Calu3 (cell line): ENCODE measurements at regions of chrX and their contacts with region 1.

Region 1: GRCh38 chrX:3638280-3638873 is 75.1 kb downstream of the PRKX start:
- DNase-seq: peak; percentile 43
- H3K4me3 Mint-ChIP-seq: no peak overlapping the region
- H3K27ac Mint-ChIP-seq: no peak overlapping the region
- H3K4me1 Mint-ChIP-seq: no peaks in the 10 kb centered on the region
- H3K27me3 Mint-ChIP-seq: no peaks in the 10 kb centered on the region
- CTCF ChIP-seq: peak; percentile 35

Region 2: DNA sequence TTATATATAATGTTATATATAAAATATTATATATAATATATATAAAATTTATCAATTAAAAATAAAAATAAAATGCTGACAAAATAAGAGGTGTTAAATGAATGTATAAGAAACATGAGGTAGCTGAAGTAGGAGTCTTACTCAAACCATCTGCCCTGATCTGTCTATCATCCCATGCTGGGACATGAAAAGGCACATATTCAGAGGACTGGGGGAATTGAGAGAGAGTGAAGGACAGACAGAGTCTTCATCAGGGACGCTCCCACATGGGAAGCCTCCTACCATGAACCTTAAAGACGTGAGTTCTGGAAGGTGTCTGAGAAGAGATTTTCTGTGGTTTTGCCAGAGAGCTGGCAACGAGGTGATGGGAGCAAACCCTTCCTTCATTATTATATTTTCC is 601.2 kb before region 1 on chrX:
- CTCF ChIA-PET with region 1: no interaction called
- intact Hi-C with region 1: loop called (anchors 10 kb)
- DNase-seq: no peak
- H3K4me3 Mint-ChIP-seq: no peak overlapping the region
- H3K27ac Mint-ChIP-seq: no peak overlapping the region
- H3K4me1 Mint-ChIP-seq: peaks cover 9% of the 10 kb centered on the region
- H3K27me3 Mint-ChIP-seq: no peaks in the 10 kb centered on the region
- CTCF ChIP-seq: no peak

Region 3: GRCh38 chrX:3119376-3119775 is 519.0 kb before region 1 on chrX:
- CTCF ChIA-PET with region 1: interaction called, 5 read pairs
- intact Hi-C with region 1: loop called (anchors 1 kb)
- DNase-seq: no peak
- H3K4me3 Mint-ChIP-seq: no peak overlapping the region
- H3K27ac Mint-ChIP-seq: no peak overlapping the region
- H3K4me1 Mint-ChIP-seq: no peaks in the 10 kb centered on the region
- H3K27me3 Mint-ChIP-seq: no peaks in the 10 kb centered on the region
- CTCF ChIP-seq: no peak